Lower leg skin (tissue), 4 donors: ENCODE measurements at regions of chr5 and their contacts with region 1.

Region 1: GRCh38 chr5:36397901-36398536 is 96.3 kb upstream of the RANBP3L start:
- DNase-seq: no peak
- H3K4me3 ChIP-seq: no peak overlapping the region
- CTCF ChIP-seq: no peak
- POLR2A ChIP-seq: no peak

Region 2: GRCh38 chr5:36252722-36253365 is 145.2 kb before region 1 on chr5:
- intact Hi-C with region 1: loop called (anchors 10 kb)
- DNase-seq: no peak
- H3K4me3 ChIP-seq: no peak overlapping the region
- CTCF ChIP-seq: no peak
- POLR2A ChIP-seq: no peak